Dorsolateral prefrontal cortex (tissue), 120 donors: ENCODE measurements at regions of chr15 and their contacts with region 1.

Region 1: DNA sequence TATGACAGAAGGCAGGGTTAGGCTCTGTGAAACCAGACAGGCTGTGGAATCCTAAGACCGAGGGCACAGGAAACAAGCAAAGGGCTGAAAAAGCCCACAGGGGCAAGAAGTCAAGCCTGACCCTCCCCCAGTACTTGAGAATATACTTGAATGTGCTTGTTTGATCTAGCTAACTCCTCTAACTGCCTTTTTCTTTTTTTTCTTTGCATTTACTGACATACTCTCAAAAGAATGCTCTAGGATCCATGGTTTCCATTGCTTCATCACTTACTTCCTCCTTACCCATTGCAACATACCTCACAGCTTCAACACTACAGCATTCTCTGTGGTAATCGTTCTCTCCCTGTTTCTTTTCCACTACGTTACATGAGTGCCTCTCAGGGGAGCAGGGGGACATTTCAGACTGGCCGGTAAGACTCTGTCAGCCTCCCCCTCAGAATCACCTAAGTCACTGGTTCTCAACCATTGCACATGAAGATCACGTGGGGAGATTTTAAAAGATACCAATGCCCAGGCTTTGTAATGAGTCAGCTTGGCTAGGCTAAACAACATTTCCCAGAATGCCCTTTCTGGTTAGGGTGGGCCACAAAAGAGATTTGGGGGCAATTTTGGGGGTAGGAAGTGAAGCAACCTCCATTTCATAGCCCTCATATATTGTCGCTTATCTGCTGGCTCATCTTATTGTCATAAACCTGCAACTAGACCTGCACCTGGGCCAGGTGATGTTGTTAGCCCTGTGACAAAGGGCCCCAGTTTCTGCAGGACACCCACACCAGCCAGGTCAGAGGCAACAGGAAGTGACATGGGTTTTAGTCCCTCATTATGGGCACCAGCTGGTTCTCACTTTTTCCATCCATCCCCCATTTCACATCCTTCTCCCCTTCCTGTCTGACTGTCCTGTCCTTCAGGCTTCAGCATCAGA is 24.6 kb upstream of the RSL24D1 start:
- DNase-seq: no peak
- H3K4me3 ChIP-seq: no peak overlapping the region
- H3K27ac ChIP-seq: peak overlapping the region in 8 of 59 donors; percentile 22 to 72 (median 43)
- H3K27me3 ChIP-seq: no peaks in the 10 kb centered on the region
- CTCF ChIP-seq: no peak

Region 2: GRCh38 chr15:55290528-55291057 is 69.2 kb after region 1 on chr15:
- intact Hi-C with region 1: loop called (anchors 2 kb)
- DNase-seq: peak; percentile 67 to 84 (median 77)
- H3K4me3 ChIP-seq: peak overlapping the region; percentile 43 to 86 (median 77)
- H3K27ac ChIP-seq: peak overlapping the region in 36 of 59 donors; percentile 3 to 85 (median 66)
- H3K27me3 ChIP-seq: no peaks in the 10 kb centered on the region
- CTCF ChIP-seq: peak in 55 of 56 donors; percentile 50 to 96 (median 88)

Region 3: GRCh38 chr15:55434989-55435825 is 213.9 kb after region 1 on chr15:
- intact Hi-C with region 1: loop called (anchors 10 kb)
- DNase-seq: no peak
- H3K4me3 ChIP-seq: no peak overlapping the region
- H3K27ac ChIP-seq: no peak overlapping the region
- H3K27me3 ChIP-seq: no peaks in the 10 kb centered on the region
- CTCF ChIP-seq: peak; percentile 24 to 69 (median 50)